ENCODE measurements at regions of chr10 and their contacts with region 1.

Region 1: DNA sequence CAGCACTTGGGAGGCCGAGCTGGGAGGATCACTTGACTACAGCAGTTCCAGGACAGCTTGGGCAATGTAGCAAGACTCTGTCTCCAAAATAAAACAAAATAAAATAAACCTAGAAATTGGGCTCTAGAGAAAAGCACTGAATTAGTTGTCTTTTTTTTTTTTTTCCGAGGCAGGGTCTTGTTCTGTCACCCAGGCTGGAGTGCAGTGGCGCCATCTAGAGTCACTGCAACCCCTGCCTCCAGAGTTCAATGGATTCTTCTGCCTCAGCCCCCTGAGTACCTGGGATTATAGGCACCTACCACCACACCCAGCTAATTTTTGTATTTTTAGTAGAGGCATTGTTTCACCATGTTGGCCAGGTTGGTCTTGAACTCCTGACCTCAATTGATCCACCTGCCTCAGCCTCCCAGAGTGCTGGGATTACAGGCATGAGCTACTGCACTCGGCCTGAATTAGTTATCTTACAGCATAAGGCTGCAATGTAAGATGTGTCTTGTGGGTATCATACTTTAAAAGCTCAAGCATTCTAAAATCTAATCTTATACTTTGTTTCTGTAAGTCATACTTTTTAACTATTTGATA is 12.8 kb downstream of the MEIG1 start:
- DNase-seq: no peak
- H3K4me3 ChIP-seq: no peak overlapping the region
- H3K27ac ChIP-seq: no peak overlapping the region
- H3K4me1 ChIP-seq: no peaks in the 10 kb centered on the region
- H3K27me3 ChIP-seq: peaks cover 23% of the 10 kb centered on the region
- CTCF ChIP-seq: peak; percentile 67

Region 2: DNA sequence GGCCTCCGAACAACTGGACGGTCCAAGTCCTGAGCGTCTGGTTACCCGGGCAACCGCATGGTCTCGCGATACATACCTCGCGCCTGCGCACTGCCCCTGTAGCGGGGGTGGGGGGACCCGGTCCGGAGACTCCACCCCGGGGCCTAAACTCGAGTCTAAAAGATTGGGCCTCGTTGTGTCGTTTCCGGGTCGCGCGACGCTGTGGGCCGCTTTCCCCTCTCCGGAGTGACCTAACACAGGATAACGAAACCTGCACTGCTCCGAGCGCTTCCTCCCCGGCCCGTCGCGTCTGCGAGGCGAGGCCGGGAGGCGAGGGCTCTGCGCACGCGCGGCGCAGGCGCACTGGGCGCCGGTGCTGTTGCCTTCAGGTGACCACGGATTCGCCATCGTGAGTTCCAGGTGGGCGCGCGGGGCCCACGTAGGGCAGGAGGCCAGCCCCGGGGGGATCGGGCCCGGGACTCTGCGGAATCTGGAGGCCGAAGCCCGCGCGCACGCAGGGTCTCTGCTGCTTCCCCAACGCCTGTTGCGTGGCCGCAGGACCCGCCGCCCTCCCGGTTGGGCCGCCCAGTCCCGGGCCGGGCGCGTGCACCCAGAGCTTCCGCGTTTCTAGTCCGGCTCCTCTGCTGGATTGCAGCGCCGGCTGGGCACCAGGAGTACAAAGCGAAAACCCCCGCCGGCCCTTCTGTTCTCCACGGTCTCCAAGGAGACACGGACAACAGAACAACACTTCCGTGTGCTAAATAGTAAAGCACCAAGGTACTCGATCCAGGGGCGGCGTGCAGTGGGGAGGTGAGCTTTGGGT is 125.3 kb after region 1 on chr10 and contains the start of gene RPP38:
- intact Hi-C with region 1: loop called (anchors 10 kb)
- DNase-seq: peak; percentile 95
- H3K4me3 ChIP-seq: peak within 1 kb of the TSS; percentile 88
- H3K27ac ChIP-seq: peak within 1 kb of the TSS; percentile 97
- H3K4me1 ChIP-seq: peaks cover 36% of the 10 kb centered on the region
- H3K27me3 ChIP-seq: peaks cover 2% of the 10 kb centered on the region
- CTCF ChIP-seq: no peak
- total RNA-seq, gene RPP38: 9.9 TPM